ENCODE measurements at regions of chr16 and their contacts with region 1.

Region 1: GRCh38 chr16:23803591-23804123 is 32.1 kb upstream of the PRKCB start:
- DNase-seq: peak; percentile 47 to 59
- H3K4me3 ChIP-seq: no peak overlapping the region
- H3K27ac ChIP-seq: no peak overlapping the region
- H3K4me1 ChIP-seq: peaks cover 0 to 17% (median 10%) of the 10 kb centered on the region in 4 donors
- H3K27me3 ChIP-seq: peaks cover 0 to 13% (median 0%) of the 10 kb centered on the region in 3 donors
- CTCF ChIP-seq: peak in 4 of 7 experiments; percentile 19 to 47 (median 32)
- EP300 ChIP-seq: no peak
- POLR2A ChIP-seq: no peak

Region 2: DNA sequence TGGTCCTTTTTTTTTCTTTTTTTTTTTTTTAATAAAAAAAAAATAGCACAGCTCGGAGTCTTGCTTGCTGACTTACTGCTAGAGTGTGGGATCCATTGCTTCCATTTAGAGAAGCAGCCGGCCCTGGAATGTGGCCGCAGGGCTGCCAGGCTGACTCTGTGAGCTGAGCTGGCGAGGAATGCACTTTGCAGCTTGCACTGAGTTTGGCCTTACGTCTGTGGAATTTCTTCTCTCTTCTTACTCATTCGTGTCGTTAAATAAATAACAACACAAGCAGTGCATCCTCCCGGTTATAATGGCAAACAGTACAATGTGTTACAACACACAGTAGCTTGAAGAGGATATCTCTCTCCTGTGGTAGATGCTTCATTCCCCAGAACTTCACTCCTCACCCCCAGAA is 101.4 kb after region 1 on chr16:
- intact Hi-C with region 1: no loop called
- DNase-seq: peak in 1 of 2 donors; percentile 74
- H3K4me3 ChIP-seq: no peak overlapping the region
- H3K27ac ChIP-seq: peak overlapping the region in 4 of 5 donors; percentile 56 to 83 (median 67)
- H3K4me1 ChIP-seq: peaks cover 0 to 52% (median 4%) of the 10 kb centered on the region in 4 donors
- H3K27me3 ChIP-seq: no peaks in the 10 kb centered on the region
- CTCF ChIP-seq: no peak
- EP300 ChIP-seq: no peak
- POLR2A ChIP-seq: no peak

Region 3: GRCh38 chr16:24036614-24037013 is 233.0 kb after region 1 on chr16:
- intact Hi-C with region 1: loop called (anchors 10 kb)
- DNase-seq: peak; percentile 28 to 75
- H3K4me3 ChIP-seq: no peak overlapping the region
- H3K27ac ChIP-seq: no peak overlapping the region
- H3K4me1 ChIP-seq: peaks cover 0 to 16% (median 3%) of the 10 kb centered on the region in 4 donors
- H3K27me3 ChIP-seq: peaks cover 0 to 25% (median 0%) of the 10 kb centered on the region in 3 donors
- CTCF ChIP-seq: peak in 5 of 7 experiments; percentile 47 to 71 (median 66)
- EP300 ChIP-seq: no peak
- POLR2A ChIP-seq: no peak

Measured in stomach (tissue), 19 donors.